Activated B cell treated with CpG ODN at 0.5 μM for 24 hours (primary cell): ENCODE measurements at regions of chr5 and their contacts with region 1.

Region 1: DNA sequence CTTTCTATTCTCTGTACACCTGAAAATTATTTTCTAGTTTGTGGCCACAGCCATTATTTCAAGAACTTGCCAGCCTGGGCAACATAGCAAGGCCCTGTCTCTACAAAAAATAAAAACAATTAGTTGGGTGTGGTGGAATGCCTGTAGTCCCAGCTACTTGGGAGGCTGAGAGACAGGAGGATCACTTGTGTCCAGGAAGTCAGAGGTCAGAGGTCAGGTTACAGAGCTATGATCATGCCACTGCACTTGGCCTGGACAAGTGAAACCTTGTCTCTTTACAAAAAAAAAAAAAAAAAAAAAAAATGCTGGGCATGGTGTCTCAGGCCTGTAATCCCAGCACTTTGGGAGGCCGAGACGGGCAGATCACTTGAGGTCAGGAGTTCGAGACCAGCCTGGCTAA is 58.3 kb downstream of the HMGCR start:
- DNase-seq: no peak
- ATAC-seq: no peak
- H3K4me3 Mint-ChIP-seq: no peak overlapping the region
- H3K27ac Mint-ChIP-seq: no peak overlapping the region
- H3K4me1 Mint-ChIP-seq: no peaks in the 10 kb centered on the region
- H3K27me3 Mint-ChIP-seq: no peaks in the 10 kb centered on the region
- CTCF ChIP-seq: no peak

Region 2: DNA sequence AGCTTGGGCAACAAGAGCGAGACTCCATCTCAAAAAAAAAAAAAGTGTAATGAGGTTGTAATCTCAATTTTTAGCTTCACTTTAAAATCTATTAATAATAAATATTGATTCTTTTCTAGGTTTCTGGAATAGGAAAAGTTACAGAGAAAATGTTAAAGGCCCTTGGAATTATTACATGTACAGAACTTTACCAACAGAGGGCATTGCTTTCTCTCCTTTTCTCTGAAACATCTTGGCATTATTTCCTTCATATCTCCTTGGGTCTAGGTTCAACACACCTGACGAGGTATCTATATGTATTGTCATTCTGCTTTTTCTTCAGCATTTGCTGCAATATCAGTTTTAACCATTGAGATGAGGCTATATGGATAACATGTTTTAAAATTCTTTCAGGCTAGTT is 189.4 kb after region 1 on chr5:
- CTCF ChIA-PET with region 1: no interaction called
- POLR2A ChIA-PET with region 1: interaction called, 11 read pairs
- intact Hi-C with region 1: no loop called
- DNase-seq: no peak
- ATAC-seq: no peak
- H3K4me3 Mint-ChIP-seq: no peak overlapping the region
- H3K27ac Mint-ChIP-seq: no peak overlapping the region
- H3K4me1 Mint-ChIP-seq: no peaks in the 10 kb centered on the region
- H3K27me3 Mint-ChIP-seq: no peaks in the 10 kb centered on the region
- CTCF ChIP-seq: no peak

Region 3: DNA sequence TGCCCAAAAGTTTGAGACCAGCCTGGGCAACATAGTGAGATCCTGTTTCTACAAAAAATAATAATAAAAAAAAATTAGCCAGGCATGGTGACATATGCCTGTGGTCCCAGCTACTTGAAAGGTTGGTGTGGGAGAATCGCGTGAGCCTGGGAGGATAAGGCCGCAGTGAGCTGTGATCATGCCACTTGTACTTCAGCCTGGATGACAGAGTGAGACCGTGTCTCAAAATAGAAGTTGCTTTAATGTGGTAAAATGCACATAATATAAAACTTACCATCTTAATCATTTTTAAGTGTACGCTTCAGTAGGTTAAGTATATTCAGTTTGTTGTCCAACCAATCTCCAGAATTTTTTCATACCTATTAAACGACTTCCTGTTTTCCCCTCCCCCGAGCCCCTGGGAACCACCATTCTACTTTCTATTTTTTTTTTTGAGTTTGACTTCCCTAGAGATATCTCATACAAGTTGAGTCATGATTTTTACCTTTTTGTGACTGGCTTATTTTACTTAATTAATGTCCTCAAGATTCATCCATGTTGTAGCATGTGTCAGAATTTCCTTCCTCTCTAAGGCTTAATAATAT is 442.1 kb after region 1 on chr5:
- CTCF ChIA-PET with region 1: no interaction called
- POLR2A ChIA-PET with region 1: interaction called, 16 read pairs
- intact Hi-C with region 1: no loop called
- DNase-seq: no peak
- ATAC-seq: peak; percentile 52
- H3K4me3 Mint-ChIP-seq: peak overlapping the region; percentile 37
- H3K27ac Mint-ChIP-seq: no peak overlapping the region
- H3K4me1 Mint-ChIP-seq: peaks cover 15% of the 10 kb centered on the region
- H3K27me3 Mint-ChIP-seq: no peaks in the 10 kb centered on the region
- CTCF ChIP-seq: no peak